Activated naive CD4-positive, alpha-beta T cell treated with anti-CD3 and anti-CD28 coated beads for 36 hours (primary cell): ENCODE measurements at regions of chr17 and their contacts with region 1.

Region 1: GRCh38 chr17:21284319-21285163 is at the start of gene MAP2K3:
- DNase-seq: peak; percentile 97
- H3K4me3 Mint-ChIP-seq: peak within 1 kb of the TSS; percentile 100
- H3K27ac Mint-ChIP-seq: peak within 1 kb of the TSS; percentile 95
- H3K4me1 Mint-ChIP-seq: peaks cover 62% of the 10 kb centered on the region
- H3K27me3 Mint-ChIP-seq: no peaks in the 10 kb centered on the region
- total RNA-seq, gene MAP2K3: 87.0 to 87.2 TPM

Region 2: GRCh38 chr17:20155258-20156195 is 1129.0 kb before region 1 on chr17:
- CTCF ChIA-PET with region 1: no interaction called
- intact Hi-C with region 1: loop called (anchors 5 kb)
- DNase-seq: peak; percentile 98
- H3K4me3 Mint-ChIP-seq: no peak overlapping the region
- H3K27ac Mint-ChIP-seq: no peak overlapping the region
- H3K4me1 Mint-ChIP-seq: peaks cover 7% of the 10 kb centered on the region
- H3K27me3 Mint-ChIP-seq: peaks cover 8% of the 10 kb centered on the region

Region 3: DNA sequence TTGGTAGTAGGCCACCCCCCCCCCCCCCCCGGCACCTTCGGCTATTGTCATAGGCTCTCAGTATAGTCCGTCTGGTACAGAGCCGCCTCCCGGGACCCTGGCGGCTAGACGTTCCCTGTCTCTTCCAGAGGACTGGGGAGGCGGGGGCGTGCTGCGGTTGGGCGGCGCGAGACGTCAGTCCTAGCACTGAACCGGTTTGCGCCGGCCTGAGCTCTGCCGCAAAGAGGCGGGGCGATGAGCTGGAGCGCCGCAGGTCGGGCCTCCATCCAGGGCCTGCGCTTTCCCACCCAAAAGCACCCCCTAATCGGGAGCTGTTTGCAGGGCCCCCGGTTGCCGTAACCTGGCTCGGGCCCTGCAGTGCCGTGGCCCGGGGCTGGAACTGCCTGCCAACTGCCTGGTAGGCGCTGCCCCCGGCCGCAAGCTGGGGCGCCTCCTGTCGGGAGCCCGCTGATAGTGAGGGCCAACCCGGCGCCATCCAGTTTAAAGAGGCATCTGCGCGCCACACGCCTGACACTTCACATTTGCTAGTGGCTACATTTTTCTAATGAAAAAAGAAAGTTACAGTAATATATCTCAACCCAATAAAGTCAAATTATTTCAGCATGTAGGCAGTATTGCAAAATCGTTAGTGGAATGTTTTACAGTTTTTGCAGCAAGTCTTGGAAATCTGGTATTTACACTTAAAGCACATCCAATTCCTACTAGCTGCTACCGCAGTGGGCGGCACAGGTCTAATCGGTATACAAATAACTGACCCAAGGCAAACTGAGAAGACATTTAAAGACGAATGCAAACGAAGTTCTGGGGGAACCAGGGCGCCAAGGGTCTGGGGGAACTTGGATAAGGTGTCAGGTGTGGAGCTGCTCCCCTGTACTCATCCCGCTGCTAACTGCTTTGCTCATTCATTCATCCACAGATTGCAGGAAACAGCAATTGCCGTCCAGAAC is 241.0 kb before region 1 on chr17:
- CTCF ChIA-PET with region 1: interaction called, 5 read pairs
- intact Hi-C with region 1: loop called (anchors 1 kb)
- DNase-seq: peak; percentile 98
- H3K4me3 Mint-ChIP-seq: peak overlapping the region; percentile 76
- H3K27ac Mint-ChIP-seq: peak overlapping the region; percentile 95
- H3K4me1 Mint-ChIP-seq: peaks cover 28% of the 10 kb centered on the region
- H3K27me3 Mint-ChIP-seq: no peaks in the 10 kb centered on the region

Region 4: GRCh38 chr17:21126645-21127510 is 157.7 kb before region 1 on chr17 and contains the start of gene DHRS7B:
- CTCF ChIA-PET with region 1: interaction called, 5 read pairs
- intact Hi-C with region 1: loop called (anchors 1 kb)
- DNase-seq: peak; percentile 98
- H3K4me3 Mint-ChIP-seq: peak within 1 kb of the TSS; percentile 95
- H3K27ac Mint-ChIP-seq: peak within 1 kb of the TSS; percentile 94
- H3K4me1 Mint-ChIP-seq: peaks cover 35% of the 10 kb centered on the region
- H3K27me3 Mint-ChIP-seq: no peaks in the 10 kb centered on the region
- total RNA-seq, gene DHRS7B: 12.0 to 12.1 TPM

Region 5: DNA sequence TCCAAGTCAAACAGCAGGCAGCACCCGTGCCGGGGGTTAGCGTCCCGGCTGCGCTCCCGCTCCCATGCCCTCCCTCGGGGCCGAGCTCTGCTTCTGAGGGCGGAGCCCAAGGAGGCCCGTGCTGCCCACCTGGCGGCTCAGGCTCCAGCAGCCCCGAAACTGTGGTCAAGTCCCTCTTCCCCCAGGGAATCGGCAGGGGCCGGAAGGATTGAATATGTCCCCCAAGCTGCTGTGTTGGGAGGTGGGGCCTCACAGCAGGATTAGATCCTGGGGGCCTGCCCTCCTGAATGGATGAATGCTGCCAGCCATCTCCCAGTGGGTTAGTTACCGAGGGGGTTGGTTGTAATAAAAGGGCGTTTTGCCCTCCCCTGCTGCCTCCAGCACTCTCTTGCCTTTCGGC is 33.9 kb after region 1 on chr17:
- CTCF ChIA-PET with region 1: no interaction called
- intact Hi-C with region 1: loop called (anchors 1 kb)
- DNase-seq: no peak
- H3K4me3 Mint-ChIP-seq: no peak overlapping the region
- H3K27ac Mint-ChIP-seq: no peak overlapping the region
- H3K4me1 Mint-ChIP-seq: peaks cover 7% of the 10 kb centered on the region
- H3K27me3 Mint-ChIP-seq: no peaks in the 10 kb centered on the region

Region 6: GRCh38 chr17:21539146-21539545 is 254.6 kb after region 1 on chr17:
- CTCF ChIA-PET with region 1: no interaction called
- intact Hi-C with region 1: loop called (anchors 2 kb)
- DNase-seq: no peak
- H3K4me3 Mint-ChIP-seq: no peak overlapping the region
- H3K27ac Mint-ChIP-seq: peak overlapping the region; percentile 69
- H3K4me1 Mint-ChIP-seq: peaks cover 33% of the 10 kb centered on the region
- H3K27me3 Mint-ChIP-seq: no peaks in the 10 kb centered on the region